ENCODE measurements at regions of chr1 and their contacts with region 1.

Region 1: DNA sequence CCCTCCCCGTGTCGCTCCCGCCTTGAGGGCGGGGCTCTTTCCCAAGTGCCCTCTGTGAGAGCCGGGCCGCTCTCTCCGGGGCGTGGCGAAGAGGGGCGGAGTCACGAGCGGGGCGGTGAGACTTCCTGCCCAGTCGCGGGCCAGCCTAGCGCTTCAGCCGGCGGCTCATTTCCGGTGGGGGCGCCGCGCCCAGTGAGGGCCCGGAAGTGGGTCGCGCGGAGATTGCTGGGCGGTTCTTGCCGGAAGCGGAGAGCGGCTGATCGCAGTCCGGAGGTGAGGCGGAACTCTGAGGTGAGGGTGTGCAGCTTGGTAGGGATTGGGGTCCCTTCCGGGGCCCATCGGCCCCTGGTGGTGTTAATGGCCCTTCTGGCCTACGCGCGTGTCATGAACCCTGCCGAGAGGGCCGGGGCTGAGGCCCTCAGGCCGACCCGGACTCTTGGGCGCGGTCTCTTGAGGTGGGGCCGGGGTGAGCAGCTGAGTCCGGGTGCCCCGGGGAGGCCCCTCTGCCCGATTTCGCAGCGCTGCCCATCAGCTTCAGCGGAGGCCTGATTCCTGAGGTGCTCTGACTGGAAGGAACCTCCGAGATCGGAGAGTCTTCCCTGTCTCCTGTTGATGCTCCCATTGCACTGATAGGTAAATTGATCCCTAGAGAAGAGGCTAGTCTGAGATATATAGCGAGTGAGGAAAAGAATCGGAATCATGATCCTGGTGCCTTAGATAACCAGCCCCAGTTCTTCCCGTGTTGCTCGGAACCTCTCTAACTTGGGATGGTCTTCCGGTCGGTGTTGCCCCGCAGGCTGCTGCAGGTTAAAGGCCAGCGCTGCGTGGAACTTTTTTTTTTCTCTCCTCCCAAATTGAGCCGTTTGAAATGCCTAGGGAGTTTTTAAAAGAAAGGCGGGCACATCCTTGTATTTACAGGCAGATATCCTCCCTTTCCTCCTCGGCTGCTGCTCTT is at the start of gene CAP1:
- DNase-seq: peak; percentile 100
- H3K4me3 Mint-ChIP-seq: peak within 1 kb of the TSS; percentile 97
- H3K27ac Mint-ChIP-seq: peak within 1 kb of the TSS; percentile 99
- H3K4me1 Mint-ChIP-seq: peaks cover 70% of the 10 kb centered on the region
- H3K27me3 Mint-ChIP-seq: no peaks in the 10 kb centered on the region
- total RNA-seq, gene CAP1: 421 and 435 TPM in 2 replicates

Region 2: DNA sequence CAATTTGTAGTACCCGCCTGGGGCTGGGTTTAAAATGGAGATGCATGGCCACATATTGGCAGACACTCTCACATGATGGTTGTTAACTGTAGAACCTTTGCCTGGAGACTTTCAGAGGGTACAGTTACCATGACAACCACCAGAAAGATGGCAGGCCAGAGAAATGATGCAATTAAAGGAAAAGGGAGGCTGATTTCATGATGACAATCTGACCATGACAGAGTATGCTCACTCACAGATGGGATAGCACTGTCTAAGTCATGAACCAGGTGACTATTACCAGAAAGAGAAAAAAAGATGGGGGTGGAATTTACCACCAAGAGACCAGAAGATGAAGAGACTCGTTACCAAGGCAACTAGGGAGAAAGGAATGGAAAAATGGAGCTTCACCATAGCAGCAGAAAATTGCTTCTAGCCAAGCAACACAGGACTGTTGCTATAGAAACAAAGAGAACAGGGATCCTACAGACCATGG is 154.0 kb before region 1 on chr1:
- intact Hi-C with region 1: loop called (anchors 1 kb)
- DNase-seq: no peak
- H3K4me3 Mint-ChIP-seq: no peak overlapping the region
- H3K27ac Mint-ChIP-seq: no peak overlapping the region
- H3K4me1 Mint-ChIP-seq: peaks cover 11% of the 10 kb centered on the region
- H3K27me3 Mint-ChIP-seq: peaks cover 15% of the 10 kb centered on the region

Region 3: DNA sequence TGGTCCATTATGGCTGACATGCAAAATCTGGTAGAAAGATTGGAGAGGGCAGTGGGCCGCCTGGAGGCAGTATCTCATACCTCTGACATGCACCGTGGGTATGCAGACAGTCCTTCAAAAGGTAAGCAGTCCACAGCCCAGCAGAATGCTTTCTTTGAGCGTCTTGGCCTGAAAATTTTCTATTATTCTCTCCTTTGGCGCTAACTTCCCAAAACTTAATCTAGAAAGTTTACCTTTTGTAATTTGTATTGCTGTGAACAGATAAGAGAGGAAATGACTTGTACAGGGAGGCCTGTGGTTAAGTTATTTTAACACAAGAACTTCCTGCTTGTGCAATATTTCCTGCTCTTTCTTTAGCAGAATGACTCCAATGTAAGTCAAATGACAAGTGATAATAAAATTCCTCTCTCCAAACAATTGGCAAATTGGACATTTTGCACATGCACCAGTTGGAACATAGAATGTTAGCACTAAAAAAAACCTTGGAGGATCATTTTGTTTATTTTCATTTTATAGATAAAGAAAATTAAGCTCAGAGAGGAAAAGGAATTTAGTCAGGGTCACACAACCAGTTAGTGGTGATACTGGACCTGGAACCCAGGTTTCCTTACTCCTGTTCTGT is 18.7 kb after region 1 on chr1:
- intact Hi-C with region 1: loop called (anchors 1 kb)
- DNase-seq: peak; percentile 3
- H3K4me3 Mint-ChIP-seq: peak overlapping the region; percentile 53
- H3K27ac Mint-ChIP-seq: peak overlapping the region; percentile 78
- H3K4me1 Mint-ChIP-seq: peaks cover 83% of the 10 kb centered on the region
- H3K27me3 Mint-ChIP-seq: no peaks in the 10 kb centered on the region

Region 4: DNA sequence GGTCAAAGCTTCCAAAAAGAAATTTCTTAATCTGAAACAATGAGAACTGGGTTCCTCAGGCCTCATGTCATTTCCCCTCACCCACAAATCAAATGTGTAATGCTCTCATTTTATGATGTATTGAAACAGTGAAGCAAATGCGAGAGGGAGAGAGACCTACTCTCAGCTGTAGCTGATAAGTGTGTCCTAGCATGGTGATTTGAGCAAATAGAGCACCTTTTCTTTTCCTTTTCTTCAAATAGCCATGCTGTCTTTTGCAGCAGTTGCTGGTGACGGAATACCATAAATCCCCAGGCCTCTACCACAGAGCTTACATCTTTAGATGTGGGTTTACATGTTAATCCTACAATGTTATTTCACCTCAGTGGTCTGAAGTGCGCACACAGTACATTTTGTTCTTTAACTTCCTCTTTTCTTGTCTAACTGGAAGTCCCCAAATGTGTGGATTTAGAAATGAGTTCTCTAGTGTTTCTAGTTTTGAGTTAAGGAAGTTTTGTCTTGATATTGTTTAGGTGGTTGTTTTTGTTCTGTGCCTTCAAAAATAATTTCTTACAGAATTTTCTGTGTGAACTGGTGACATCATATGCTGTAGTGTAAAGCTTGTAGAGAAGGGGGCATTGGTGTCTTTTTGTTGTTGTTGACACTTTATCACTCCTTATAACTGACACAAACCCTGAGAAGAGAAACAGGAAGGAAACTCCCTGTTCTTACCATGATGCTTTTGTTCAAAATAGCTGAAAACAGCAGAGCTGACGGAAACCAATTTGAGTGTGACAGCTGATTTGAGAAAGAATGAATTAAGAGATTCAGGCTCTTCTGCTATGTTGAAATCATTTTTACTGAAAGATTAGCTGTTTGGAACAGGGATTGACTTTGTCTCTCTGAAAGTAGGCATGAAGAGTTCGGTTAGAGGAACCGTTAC is 344.9 kb after region 1 on chr1:
- intact Hi-C with region 1: loop called (anchors 2 kb)
- DNase-seq: peak; percentile 73
- H3K4me3 Mint-ChIP-seq: peak overlapping the region; percentile 82
- H3K27ac Mint-ChIP-seq: peak overlapping the region; percentile 99
- H3K4me1 Mint-ChIP-seq: peaks cover 89% of the 10 kb centered on the region
- H3K27me3 Mint-ChIP-seq: no peaks in the 10 kb centered on the region